CD4-positive, alpha-beta memory T cell (primary cell): ENCODE measurements at regions of chr12 and their contacts with region 1.

Region 1: GRCh38 chr12:57904848-57905811 is 36.2 kb upstream of the ATP23 start:
- DNase-seq: peak; percentile 76 to 84 (median 80)
- H3K4me3 ChIP-seq: no peak overlapping the region
- H3K4me3 Mint-ChIP-seq: peak overlapping the region in 6 of 8 donors; percentile 37 to 74 (median 64)
- H3K27ac ChIP-seq: no peak overlapping the region
- H3K27ac Mint-ChIP-seq: peak overlapping the region; percentile 2 to 86 (median 50)
- H3K4me1 ChIP-seq: peaks cover 3% of the 10 kb centered on the region
- H3K4me1 Mint-ChIP-seq: peaks cover 5 to 9% (median 7%) of the 10 kb centered on the region in 4 donors
- H3K27me3 ChIP-seq: no peaks in the 10 kb centered on the region
- H3K27me3 Mint-ChIP-seq: peaks cover 0 to 3% of the 10 kb centered on the region in 2 donors

Region 2: GRCh38 chr12:57583008-57583831 is 321.9 kb before region 1 on chr12:
- CTCF ChIA-PET with region 1: interaction called, 6 read pairs
- POLR2A ChIA-PET with region 1: no interaction called
- intact Hi-C with region 1: loop called (anchors 1 kb)
- DNase-seq: peak; percentile 70 to 77 (median 74)
- H3K4me3 ChIP-seq: no peak overlapping the region
- H3K4me3 Mint-ChIP-seq: no peak overlapping the region
- H3K27ac ChIP-seq: no peak overlapping the region
- H3K27ac Mint-ChIP-seq: peak overlapping the region in 2 of 7 donors; percentile 26 to 38
- H3K4me1 ChIP-seq: no peaks in the 10 kb centered on the region
- H3K4me1 Mint-ChIP-seq: peaks cover 3 to 7% (median 5%) of the 10 kb centered on the region in 4 donors
- H3K27me3 ChIP-seq: no peaks in the 10 kb centered on the region
- H3K27me3 Mint-ChIP-seq: peaks cover 6 to 9% of the 10 kb centered on the region in 2 donors

Region 3: DNA sequence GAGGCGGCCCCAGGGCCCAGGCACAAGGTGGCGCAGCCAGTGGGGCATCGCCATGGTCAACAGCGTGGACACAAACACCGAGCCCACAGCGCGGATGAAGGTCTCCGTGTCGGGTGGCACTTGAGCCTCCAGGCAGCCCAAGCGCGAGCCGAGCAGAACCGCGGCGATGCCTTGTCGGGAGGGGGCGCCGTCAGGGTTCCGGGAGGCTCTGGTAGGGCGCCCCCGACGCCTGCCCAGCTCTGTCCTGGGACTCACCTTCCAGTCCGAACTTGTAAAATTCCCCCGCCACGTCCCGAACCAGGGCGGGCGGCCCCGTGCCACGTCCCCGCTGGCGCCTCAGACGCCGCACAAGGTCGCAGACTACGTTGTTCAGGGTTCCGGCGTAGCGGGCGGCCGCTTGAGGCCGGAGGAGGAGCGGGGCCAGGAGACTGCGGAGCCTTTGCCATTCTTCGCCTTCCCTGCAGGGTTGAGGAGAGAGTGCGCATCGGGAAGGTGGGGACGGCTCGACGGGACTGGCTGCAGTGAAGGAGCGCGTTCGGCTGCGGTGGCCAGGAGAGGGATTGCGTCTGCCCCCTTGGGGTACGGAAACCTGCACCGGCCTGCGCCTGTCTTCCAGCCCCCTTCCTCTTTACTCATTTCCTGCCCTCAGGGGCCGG is 140.0 kb before region 1 on chr12:
- CTCF ChIA-PET with region 1: interaction called, 45 read pairs
- POLR2A ChIA-PET with region 1: interaction called, 3 read pairs
- intact Hi-C with region 1: loop called (anchors 2 kb)
- DNase-seq: peak in 4 of 5 donors; percentile 39 to 51 (median 48)
- H3K4me3 ChIP-seq: peak overlapping the region; percentile 37 to 60
- H3K4me3 Mint-ChIP-seq: peak overlapping the region; percentile 85 to 94 (median 88)
- H3K27ac ChIP-seq: peak overlapping the region; percentile 26
- H3K27ac Mint-ChIP-seq: peak overlapping the region in 6 of 7 donors; percentile 23 to 74 (median 34)
- H3K4me1 ChIP-seq: peaks cover 30% of the 10 kb centered on the region
- H3K4me1 Mint-ChIP-seq: peaks cover 8 to 47% (median 23%) of the 10 kb centered on the region in 4 donors
- H3K27me3 ChIP-seq: peaks cover 19% of the 10 kb centered on the region
- H3K27me3 Mint-ChIP-seq: peaks cover 6 to 13% of the 10 kb centered on the region in 2 donors

Region 4: DNA sequence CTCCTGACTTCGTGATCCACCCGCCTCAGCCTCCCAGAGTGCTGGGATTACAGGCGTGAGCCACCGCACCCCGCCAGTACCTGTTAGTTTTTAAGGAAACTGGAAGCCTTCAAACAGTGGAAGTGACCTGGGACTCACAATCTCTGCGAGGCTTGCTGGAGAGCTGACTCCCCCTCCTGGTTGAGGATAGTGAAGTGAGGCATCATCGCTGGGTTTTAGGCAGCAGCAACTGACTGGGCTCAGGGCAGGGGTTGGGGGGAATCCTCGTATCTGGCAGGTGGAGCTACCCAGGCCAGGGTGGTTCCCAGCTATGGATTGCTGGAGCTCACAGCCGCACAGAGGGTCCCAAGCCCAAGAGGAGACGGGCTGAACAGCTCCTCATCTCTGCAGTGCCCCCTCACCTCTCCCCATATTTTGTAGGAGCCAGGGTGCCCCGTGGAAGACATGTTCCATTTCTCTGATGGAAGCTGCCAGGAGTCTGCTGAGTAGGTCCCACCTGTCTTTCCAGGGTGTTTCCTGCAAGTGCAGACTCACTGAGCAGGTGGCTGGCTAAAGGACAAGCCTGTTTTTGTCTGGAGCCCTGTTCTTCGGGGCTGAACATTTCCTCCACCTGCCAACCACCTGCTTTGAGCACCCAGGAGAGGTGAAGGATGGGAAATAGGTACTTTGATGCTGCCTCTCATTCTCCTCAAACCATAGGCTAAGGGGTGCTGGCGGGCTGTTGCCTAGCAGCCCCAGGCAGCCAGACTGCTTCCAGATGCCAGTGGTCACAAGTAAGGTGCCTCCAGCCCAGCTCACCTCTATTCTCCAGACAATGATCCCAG is 89.7 kb before region 1 on chr12:
- CTCF ChIA-PET with region 1: interaction called, 16 read pairs
- POLR2A ChIA-PET with region 1: interaction called, 12 read pairs
- intact Hi-C with region 1: no loop called
- DNase-seq: no peak
- H3K4me3 ChIP-seq: no peak overlapping the region
- H3K4me3 Mint-ChIP-seq: no peak overlapping the region
- H3K27ac ChIP-seq: no peak overlapping the region
- H3K27ac Mint-ChIP-seq: peak overlapping the region in 1 of 7 donors; percentile 41
- H3K4me1 ChIP-seq: no peaks in the 10 kb centered on the region
- H3K4me1 Mint-ChIP-seq: peaks cover 0 to 8% (median 5%) of the 10 kb centered on the region in 4 donors
- H3K27me3 ChIP-seq: no peaks in the 10 kb centered on the region
- H3K27me3 Mint-ChIP-seq: no peaks in the 10 kb centered on the region

Region 5: DNA sequence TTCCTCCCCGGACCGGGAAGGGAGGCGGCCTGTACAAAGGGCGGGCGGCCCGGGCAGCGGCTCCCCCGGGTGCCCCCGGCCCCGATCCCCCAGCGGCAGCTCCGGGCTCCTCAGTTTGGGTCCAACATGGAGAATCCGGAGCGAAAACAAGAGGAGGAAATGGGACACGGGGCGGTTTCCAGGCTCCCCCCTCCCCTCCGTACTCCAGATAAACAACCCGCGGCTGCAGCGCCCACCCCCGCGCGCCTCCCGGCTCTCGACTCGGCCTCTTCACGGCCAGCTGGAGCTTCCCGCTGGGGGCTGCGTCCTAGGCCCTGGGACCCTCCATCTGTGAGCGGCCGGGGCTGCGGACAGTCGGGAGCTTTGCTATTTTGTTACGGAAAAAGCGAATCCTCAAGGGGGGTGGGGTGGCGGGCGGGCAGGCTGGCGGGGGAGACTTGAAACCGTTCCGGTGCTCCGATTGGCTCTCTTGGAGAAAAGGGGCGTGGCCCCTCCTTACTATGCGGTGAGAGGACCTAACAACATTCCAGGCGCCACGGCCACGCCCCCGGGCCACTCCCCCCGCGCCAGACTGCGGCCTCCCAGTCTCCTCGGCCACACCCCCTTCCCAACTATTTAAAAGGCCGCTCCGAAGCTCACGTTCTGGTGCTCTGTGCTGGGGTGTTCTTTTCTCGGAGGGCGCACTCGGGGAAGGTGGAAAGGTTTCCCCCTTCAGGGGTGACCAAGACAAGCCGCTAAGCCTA is 58.4 kb before region 1 on chr12 and contains the start of gene CTDSP2:
- CTCF ChIA-PET with region 1: interaction called, 37 read pairs
- POLR2A ChIA-PET with region 1: interaction called, 113 read pairs
- intact Hi-C with region 1: loop called (anchors 1 kb)
- DNase-seq: peak; percentile 77 to 90 (median 79)
- H3K4me3 ChIP-seq: peak within 1 kb of the TSS; percentile 84 to 87
- H3K4me3 Mint-ChIP-seq: peak within 1 kb of the TSS; percentile 84 to 96 (median 89)
- H3K27ac ChIP-seq: peak within 1 kb of the TSS; percentile 74
- H3K27ac Mint-ChIP-seq: peak within 1 kb of the TSS; percentile 71 to 95 (median 88)
- H3K4me1 ChIP-seq: peaks cover 44% of the 10 kb centered on the region
- H3K4me1 Mint-ChIP-seq: peaks cover 35 to 62% (median 45%) of the 10 kb centered on the region in 4 donors
- H3K27me3 ChIP-seq: no peaks in the 10 kb centered on the region
- H3K27me3 Mint-ChIP-seq: peaks cover 5 to 8% of the 10 kb centered on the region in 2 donors
- total RNA-seq, gene CTDSP2: 274 to 285 TPM

Region 6: GRCh38 chr12:57935839-57936512 is 30.8 kb after region 1 on chr12:
- CTCF ChIA-PET with region 1: interaction called, 6 read pairs
- POLR2A ChIA-PET with region 1: no interaction called
- intact Hi-C with region 1: loop called (anchors 1 kb)
- DNase-seq: peak; percentile 92 to 97 (median 95)
- H3K4me3 ChIP-seq: peak overlapping the region; percentile 77 to 84
- H3K4me3 Mint-ChIP-seq: peak overlapping the region; percentile 89 to 98 (median 94)
- H3K27ac ChIP-seq: peak overlapping the region; percentile 94
- H3K27ac Mint-ChIP-seq: peak overlapping the region; percentile 98 to 100 (median 100)
- H3K4me1 ChIP-seq: peaks cover 24% of the 10 kb centered on the region
- H3K4me1 Mint-ChIP-seq: peaks cover 18 to 34% (median 22%) of the 10 kb centered on the region in 4 donors
- H3K27me3 ChIP-seq: no peaks in the 10 kb centered on the region
- H3K27me3 Mint-ChIP-seq: no peaks in the 10 kb centered on the region